ENCODE measurements at regions of chr2 and their contacts with region 1.

Region 1: GRCh38 chr2:231713730-231714430 is 5.6 kb downstream of the PTMA start:
- DNase-seq: peak; percentile 72
- H3K4me3 ChIP-seq: no peak overlapping the region
- H3K27ac ChIP-seq: peak overlapping the region; percentile 75
- H3K27me3 ChIP-seq: no peaks in the 10 kb centered on the region
- CTCF ChIP-seq: peak; percentile 94

Region 2: GRCh38 chr2:231612179-231613053 is 101.5 kb before region 1 on chr2:
- CTCF ChIA-PET with region 1: interaction called, 96 read pairs
- POLR2A ChIA-PET with region 1: interaction called, 16 read pairs
- DNase-seq: peak; percentile 84
- H3K4me3 ChIP-seq: no peak overlapping the region
- H3K27ac ChIP-seq: peak overlapping the region; percentile 96
- H3K27me3 ChIP-seq: no peaks in the 10 kb centered on the region
- CTCF ChIP-seq: peak; percentile 93

Region 3: DNA sequence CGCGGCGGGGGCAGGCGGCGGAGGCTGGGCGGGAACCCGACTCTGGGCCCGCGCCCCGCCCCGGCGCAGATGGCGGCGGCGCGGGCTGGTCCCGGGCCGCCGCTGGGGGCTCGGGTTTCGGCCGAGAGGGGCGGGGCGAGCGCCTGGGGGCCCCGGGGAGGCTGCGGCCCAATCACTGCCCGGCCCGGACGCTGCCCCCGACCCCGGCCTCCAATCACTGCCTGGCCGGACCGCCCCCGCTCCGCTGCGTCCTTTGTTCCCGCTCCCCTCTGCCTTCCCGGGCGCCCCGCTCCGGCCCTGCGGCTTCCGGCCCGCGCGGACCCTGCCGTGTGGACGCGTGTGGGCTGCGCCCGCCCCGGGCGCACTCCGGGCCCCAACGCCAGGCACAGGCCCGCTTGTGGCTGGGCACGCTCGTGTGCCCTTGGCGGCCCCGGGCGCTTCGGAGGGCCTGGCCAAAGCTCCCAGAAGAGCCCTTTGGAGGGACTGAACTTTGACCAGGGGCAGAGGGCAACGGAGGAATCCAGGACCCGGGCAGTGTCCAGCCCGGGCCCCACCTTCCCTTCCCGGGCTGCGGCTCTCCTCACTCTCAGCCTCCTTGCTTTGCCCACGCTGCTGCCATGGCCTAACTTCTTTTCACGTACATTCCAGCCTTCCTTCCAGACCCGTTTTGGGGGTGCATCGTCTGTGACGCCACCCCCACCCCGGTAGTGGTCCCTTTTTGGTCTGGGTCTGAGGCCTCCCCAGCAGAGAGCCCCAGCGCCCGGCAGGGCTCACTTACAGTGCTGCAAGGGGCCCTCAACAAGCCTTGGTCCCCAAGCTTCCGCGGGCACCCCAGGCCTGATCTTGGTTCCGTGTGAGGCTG is 32.7 kb before region 1 on chr2:
- CTCF ChIA-PET with region 1: interaction called, 227 read pairs
- POLR2A ChIA-PET with region 1: interaction called, 51 read pairs
- DNase-seq: peak; percentile 57
- H3K4me3 ChIP-seq: peak overlapping the region; percentile 56
- H3K27ac ChIP-seq: peak overlapping the region; percentile 83
- H3K27me3 ChIP-seq: no peaks in the 10 kb centered on the region
- CTCF ChIP-seq: no peak

Region 4: DNA sequence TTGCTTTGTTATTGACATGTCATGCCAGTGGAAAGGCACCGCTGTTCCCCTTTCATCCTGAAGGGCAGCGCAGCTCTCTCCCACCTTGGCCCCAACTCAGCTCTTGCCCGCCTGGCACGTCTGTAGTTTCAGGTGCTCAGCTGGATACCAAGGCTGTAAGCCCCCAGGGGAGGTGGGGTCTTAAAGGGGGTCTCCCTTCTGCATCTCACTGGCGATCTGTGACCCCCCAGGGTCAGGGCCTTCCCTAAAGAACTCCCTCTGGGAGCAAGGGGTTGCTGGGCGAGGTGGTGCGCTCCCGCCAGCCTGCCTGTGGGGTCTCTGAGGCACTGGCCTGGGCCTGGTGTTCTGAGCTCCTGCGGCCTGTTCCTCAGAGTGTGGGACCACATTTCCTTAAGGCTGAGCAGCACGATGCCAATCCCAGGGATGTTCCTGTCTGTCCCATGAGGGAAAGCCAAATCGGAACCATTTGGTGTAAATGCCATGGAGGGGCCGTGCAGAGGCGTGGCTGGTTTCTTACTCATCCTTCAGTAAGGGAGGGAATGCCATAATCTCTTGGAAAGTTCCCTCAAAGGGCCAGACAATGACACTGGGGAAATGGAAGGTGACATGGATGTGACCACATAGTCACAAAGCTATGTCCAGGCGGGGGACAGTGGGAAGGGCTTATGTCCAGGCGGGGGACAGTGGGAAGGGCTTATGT is 20.1 kb before region 1 on chr2:
- CTCF ChIA-PET with region 1: interaction called, 10 read pairs
- POLR2A ChIA-PET with region 1: interaction called, 4 read pairs
- DNase-seq: no peak
- H3K4me3 ChIP-seq: no peak overlapping the region
- H3K27ac ChIP-seq: peak overlapping the region; percentile 11
- H3K27me3 ChIP-seq: no peaks in the 10 kb centered on the region
- CTCF ChIP-seq: no peak

Region 5: GRCh38 chr2:231726228-231726627 is 12.3 kb after region 1 on chr2:
- CTCF ChIA-PET with region 1: interaction called, 45 read pairs
- POLR2A ChIA-PET with region 1: interaction called, 7 read pairs
- DNase-seq: no peak
- H3K4me3 ChIP-seq: no peak overlapping the region
- H3K27ac ChIP-seq: no peak overlapping the region
- H3K27me3 ChIP-seq: no peaks in the 10 kb centered on the region
- CTCF ChIP-seq: no peak